AG04449 (cell line): ENCODE measurements at regions of chr3 and their contacts with region 1.

Region 1: GRCh38 chr3:134754768-134755559 is 40.1 kb upstream of the EPHB1 start:
- DNase-seq: no peak
- H3K4me3 ChIP-seq: no peak overlapping the region
- CTCF ChIP-seq: peak; percentile 87

Region 2: DNA sequence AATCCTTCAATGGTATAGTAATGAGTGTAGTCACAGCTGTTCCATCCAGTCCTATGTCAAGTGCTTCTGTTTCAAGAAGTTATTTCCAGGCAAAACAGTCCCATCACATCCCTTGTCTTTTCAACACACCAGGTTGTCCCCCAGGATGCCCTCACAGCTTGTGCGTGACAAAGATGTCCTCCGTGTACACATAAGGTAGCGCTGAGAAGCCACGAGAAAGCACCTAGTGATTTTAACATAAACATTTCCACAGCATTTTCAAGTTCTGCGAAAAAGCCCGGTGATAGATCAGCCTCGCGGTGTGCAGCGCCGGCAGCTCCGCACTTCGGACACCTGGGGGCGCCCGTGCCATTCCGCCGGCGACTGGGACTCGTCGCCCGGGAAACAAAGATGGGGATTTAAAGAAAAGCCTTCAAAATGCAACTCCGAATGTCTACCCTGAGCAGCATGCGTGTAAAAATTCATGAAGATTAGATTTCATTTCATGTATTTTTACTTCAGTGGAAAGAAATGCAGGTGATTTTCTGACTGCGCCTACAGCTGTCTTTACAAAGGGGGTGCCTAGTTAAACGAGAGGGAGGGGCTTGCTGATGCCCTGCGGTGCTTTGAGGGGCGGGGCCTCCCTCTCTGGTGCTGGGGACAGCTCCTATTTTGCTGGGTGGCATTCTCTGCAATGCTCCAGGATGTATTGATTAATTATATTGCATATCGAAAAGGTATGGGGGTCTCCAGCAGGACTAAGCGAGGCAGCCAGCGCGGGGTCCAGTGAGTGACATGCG is 154.1 kb before region 1 on chr3:
- CTCF ChIA-PET with region 1: interaction called, 267 read pairs
- POLR2A ChIA-PET with region 1: interaction called, 3 read pairs
- DNase-seq: no peak
- H3K4me3 ChIP-seq: peak overlapping the region; percentile 21; the same call in 1 of the 2 replicates
- CTCF ChIP-seq: peak; percentile 96

Region 3: DNA sequence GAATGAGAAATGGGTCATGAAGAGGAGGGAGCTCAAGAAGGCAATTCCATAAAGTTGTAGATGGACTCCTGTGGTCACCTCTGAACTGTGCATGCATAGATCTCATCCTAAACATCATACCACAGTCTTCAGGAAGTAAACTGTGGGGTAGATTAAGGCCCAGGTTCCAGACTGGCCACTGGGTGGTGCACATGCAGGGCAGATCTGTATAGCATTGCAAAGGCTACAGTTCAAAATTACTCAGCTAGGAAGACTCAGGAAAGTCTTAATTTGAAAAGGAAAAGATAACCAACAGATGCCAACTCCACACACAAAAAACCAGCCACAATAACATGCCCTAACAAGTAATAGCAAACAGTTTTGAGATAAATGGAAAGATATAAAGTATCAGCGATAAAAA is 124.5 kb before region 1 on chr3:
- CTCF ChIA-PET with region 1: interaction called, 25 read pairs
- POLR2A ChIA-PET with region 1: no interaction called
- DNase-seq: no peak
- H3K4me3 ChIP-seq: no peak overlapping the region
- CTCF ChIP-seq: peak; percentile 56

Region 4: DNA sequence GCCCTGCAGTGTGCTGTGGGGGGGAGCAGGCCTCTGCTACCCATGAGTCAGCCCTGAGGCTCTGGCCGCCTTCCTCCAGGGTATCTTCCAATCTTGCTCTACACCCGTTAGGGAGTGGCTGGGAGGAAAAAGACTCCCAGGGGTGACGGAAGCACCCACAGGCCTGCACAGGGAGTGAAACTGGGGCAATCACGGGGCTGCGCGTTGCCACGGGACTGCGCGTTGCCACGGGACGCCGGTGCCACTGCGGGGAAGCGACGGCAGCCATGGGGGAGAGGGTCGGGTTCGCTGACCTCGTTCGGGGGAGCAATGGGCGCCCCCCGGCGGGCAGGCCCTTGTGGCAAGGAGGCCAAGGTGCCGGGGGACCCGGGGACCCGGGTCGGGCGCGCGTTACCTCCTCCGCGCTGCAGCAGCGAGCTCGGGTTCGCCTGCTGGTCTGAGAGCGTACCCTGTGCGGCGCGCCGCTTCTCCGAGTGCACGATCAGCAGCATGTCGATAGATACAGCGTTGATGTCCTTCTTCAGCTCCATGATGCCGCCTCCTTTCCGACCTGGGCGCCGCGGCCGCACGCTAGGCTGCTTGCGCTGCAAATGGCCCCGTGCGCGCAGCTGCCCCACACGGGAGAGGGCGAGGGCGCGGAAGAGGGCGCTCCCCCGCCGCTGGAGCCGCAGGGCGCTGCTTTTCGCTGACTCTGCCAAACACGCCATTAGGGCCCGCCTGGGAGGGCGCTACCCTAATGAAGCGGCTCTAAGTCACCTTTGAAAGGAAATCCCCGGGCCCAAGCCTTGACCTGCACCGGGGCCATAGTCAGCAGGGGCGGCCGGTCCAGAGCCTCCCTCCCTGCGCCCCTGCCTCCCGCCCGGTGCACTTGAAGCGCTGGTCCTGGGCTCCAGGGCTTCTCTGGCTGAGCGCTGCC is 104.3 kb before region 1 on chr3 and contains the start of gene KY:
- CTCF ChIA-PET with region 1: interaction called, 53 read pairs
- POLR2A ChIA-PET with region 1: no interaction called
- DNase-seq: no peak
- H3K4me3 ChIP-seq: peak within 1 kb of the TSS; percentile 58
- CTCF ChIP-seq: peak; percentile 37

Region 5: GRCh38 chr3:134737516-134737915 is 17.4 kb before region 1 on chr3:
- CTCF ChIA-PET with region 1: interaction called, 33 read pairs
- POLR2A ChIA-PET with region 1: no interaction called
- DNase-seq: no peak
- H3K4me3 ChIP-seq: no peak overlapping the region
- CTCF ChIP-seq: no peak

Region 6: DNA sequence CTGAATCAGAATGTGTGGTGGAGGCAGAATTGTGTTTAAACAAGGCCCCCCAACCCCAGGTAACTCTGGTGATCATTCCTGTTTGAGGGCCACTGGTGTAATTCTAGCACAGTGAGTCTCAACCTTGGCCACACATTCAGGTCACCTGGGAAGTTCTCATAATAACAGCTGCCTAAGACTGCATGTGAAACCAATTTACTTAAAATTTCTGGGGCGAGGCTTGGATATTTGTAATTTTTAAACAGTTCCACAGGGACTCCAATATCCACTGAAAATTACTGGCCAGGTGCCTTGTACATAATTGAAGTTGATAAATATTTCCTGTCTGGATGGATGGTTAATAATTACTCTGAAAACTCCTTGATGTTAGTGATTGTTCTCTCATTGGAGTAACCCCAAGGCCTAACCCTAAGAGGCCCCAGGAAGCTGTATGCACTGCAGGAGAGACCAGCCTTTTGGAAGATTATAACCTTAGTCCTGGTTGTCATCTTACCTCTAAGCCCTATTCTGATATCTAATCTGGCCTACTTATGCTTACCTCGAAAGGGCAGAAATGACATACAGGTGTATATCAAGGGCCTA is 14.4 kb after region 1 on chr3:
- CTCF ChIA-PET with region 1: interaction called, 29 read pairs
- POLR2A ChIA-PET with region 1: no interaction called
- DNase-seq: no peak
- H3K4me3 ChIP-seq: no peak overlapping the region
- CTCF ChIP-seq: no peak

Region 7: DNA sequence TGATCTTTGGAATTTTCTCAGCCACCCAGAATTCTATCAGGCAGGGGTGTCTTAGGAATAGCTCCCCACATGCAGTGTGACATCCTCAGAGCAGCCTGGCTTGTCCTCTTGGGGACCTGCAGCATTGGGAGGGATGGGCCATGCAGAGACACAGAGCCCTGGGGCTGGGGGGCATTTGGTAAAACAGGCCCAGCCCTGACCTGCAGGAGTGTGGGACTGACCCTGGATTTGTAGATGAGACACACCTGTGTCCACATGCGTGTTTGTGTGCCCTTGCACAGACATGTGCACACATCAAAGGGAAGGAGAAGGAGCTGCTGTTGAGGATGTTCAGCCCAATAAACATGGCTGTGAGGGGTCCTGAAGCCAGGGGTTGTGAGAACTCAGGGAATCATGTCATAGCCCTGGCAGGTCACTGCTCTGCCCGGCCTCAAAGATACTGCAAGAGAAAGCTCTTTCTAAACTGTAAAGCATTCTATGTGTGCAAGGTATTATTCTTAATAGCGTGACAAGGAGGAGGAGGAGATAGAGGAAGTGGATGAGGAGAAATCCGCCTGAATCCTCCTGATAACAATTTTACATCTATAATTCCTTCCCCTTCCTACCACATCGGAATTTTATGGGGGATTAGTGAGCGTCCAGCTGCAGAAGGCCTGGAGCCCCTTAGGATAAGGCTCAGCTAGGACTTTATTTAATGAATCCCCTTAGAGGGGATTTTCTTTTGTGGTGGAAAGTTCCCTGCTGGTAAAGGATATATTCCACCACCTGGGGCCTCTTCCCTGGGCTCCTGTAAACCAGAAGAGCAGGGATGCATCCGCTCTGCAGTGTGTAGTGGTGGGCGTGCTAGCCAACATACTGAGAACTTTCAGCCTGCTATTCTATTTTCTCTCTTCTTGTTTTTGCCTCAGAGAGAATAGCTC is 285.6 kb after region 1 on chr3:
- CTCF ChIA-PET with region 1: no interaction called
- POLR2A ChIA-PET with region 1: no interaction called
- DNase-seq: no peak
- H3K4me3 ChIP-seq: no peak overlapping the region
- CTCF ChIP-seq: no peak